HCT116 (cell line): ENCODE measurements at regions of chr5 and their contacts with region 1.

Region 1: GRCh38 chr5:14727428-14727865 is 62.9 kb downstream of the OTULIN start:
- DNase-seq: peak; percentile 54
- ATAC-seq: peak; percentile 87
- H3K4me3 ChIP-seq: no peak overlapping the region
- H3K27ac ChIP-seq: no peak overlapping the region
- H3K4me1 ChIP-seq: peaks cover 0 to 10% of the 10 kb centered on the region in 2 experiments; a peak in 1 of 4 replicates
- H3K27me3 ChIP-seq: no peaks in the 10 kb centered on the region
- CTCF ChIP-seq: peak; percentile 85 to 97 (median 87)
- POLR2A ChIP-seq: no peak
- RAD21 ChIP-seq: peak; percentile 95

Region 2: GRCh38 chr5:14871210-14872069 is 144.0 kb after region 1 on chr5 and contains the start of gene ANKH:
- CTCF ChIA-PET with region 1: no interaction called
- POLR2A ChIA-PET with region 1: no interaction called
- RAD21 ChIA-PET with region 1: no interaction called
- intact Hi-C with region 1: loop called (anchors 2 kb)
- DNase-seq: peak; percentile 16
- ATAC-seq: peak; percentile 94
- H3K4me3 ChIP-seq: peak within 1 kb of the TSS; percentile 71 to 73
- H3K27ac ChIP-seq: peak within 1 kb of the TSS; percentile 47; the same call in 1 of the 2 replicates
- H3K4me1 ChIP-seq: peaks cover 3 to 15% of the 10 kb centered on the region in 2 experiments; a peak in 3 of 4 replicates
- H3K27me3 ChIP-seq: no peaks in the 10 kb centered on the region
- CTCF ChIP-seq: 0 out of 6 replicates have a peak, but pooled peaks of 1 of the 3 experiments have one; percentile 6
- POLR2A ChIP-seq: peak; percentile 49
- RAD21 ChIP-seq: no peak
- total RNA-seq, gene ANKH: 65.2 TPM

Region 3: DNA sequence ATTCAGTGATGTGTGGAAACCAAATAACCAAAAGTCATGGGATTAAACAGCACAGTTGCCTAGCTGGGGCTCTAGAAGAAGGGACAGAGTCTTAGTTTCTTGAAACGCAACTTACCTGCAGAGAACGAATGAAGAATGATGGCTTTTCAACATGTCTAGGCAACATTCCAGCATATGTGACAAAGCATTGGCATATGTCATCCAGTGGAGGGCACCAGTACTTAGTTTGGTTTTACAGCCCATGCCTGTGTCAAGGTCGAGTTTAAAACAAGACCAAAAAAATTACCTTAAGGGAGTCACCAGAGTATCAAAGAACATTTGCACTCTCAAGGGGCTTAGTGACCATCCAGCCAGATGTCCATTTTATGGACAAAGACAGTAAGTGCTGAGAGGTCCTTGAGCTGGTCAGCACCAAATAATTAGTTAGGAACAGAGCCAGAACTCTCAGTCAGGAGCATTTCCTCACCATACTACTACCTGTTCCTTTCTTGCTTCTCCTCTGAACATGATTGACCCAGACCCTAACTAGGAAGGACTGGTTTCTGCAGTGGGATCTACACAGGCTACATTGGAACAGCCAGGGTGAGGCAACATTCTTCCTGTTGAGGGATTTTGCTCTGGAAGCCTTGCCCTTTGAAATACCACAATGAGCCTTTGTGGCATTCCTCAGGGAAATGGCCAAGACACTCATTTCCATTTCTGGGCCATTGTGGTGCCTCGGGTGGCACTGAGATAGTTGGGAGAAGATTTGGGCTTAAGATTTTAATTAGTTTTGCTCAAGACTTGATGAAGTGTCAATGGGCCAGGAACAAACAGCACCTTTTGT is 219.6 kb after region 1 on chr5:
- CTCF ChIA-PET with region 1: no interaction called
- POLR2A ChIA-PET with region 1: no interaction called
- RAD21 ChIA-PET with region 1: no interaction called
- intact Hi-C with region 1: loop called (anchors 5 kb)
- DNase-seq: peak; percentile 37
- ATAC-seq: peak; percentile 93
- H3K4me3 ChIP-seq: no peak overlapping the region
- H3K27ac ChIP-seq: no peak overlapping the region
- H3K4me1 ChIP-seq: peaks cover 0 to 6% of the 10 kb centered on the region in 2 experiments; a peak in 1 of 4 replicates
- H3K27me3 ChIP-seq: no peaks in the 10 kb centered on the region
- CTCF ChIP-seq: peak; percentile 44 to 60 (median 56); a peak in 5 of 6 replicates
- POLR2A ChIP-seq: no peak
- RAD21 ChIP-seq: peak; percentile 43